HCT116 (cell line): ENCODE measurements at regions of chr5 and their contacts with region 1.

Region 1: DNA sequence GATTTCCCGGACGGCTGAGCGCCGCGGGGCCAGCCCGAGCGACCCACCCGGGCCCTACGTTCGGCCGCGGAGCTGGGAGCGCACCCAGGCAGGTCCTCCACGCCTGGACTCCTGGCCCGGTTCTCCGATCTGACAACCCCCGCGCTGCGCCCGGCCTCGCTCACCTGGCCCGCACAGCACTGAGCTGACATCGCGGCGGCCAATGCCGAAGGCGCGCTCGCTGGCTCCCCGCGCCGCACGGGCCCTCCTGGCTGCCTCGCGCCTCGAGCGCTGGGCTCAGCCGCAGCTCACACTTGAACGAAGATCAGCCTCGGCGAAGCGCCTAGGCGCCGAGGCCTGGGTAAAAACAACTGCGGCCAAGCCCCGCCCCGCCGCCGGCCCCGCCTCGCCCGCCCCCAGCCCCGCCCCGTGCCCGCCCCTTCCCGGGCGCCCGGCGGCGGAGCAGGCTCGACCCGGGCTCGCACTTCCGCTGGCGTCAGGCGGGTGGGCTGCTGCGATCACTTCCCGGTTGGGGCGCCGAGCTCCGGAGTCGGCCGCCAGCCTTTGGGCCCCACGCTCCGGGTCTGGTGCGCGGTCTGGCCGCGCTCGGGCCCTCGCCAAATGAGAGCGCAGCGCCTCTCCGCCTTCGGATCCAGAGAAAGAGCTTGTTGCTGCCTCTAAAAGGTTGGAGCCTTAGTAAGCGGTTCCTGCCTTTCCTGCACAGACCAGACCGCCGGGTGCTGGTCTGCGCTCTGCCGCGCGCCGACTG is at the start of gene SERINC5:
- DNase-seq: peak; percentile 43
- ATAC-seq: peak; percentile 81
- H3K4me3 ChIP-seq: peak within 1 kb of the TSS; percentile 81 to 91
- H3K27ac ChIP-seq: peak within 1 kb of the TSS; percentile 88
- H3K4me1 ChIP-seq: peaks cover 13 to 39% of the 10 kb centered on the region in 2 experiments
- H3K27me3 ChIP-seq: no peaks in the 10 kb centered on the region
- CTCF ChIP-seq: no peak
- POLR2A ChIP-seq: peak; percentile 60
- RAD21 ChIP-seq: 0 out of 2 replicates have a peak, but pooled peaks have one; percentile 1
- total RNA-seq, gene SERINC5: 39.3 TPM

Region 2: GRCh38 chr5:80184235-80185023 is 71.5 kb before region 1 on chr5:
- CTCF ChIA-PET with region 1: no interaction called
- POLR2A ChIA-PET with region 1: interaction called, 7 read pairs
- RAD21 ChIA-PET with region 1: no interaction called
- intact Hi-C with region 1: loop called (anchors 2 kb)
- DNase-seq: no peak
- ATAC-seq: peak; percentile 41
- H3K4me3 ChIP-seq: peak overlapping the region in 1 of 2 experiments; percentile 24; a peak in 2 of 4 replicates
- H3K27ac ChIP-seq: peak overlapping the region; percentile 66
- H3K4me1 ChIP-seq: peaks cover 77 to 80% of the 10 kb centered on the region in 2 experiments
- H3K27me3 ChIP-seq: no peaks in the 10 kb centered on the region
- CTCF ChIP-seq: no peak
- POLR2A ChIP-seq: no peak
- RAD21 ChIP-seq: 0 out of 2 replicates have a peak, but pooled peaks have one; percentile 13

Region 3: GRCh38 chr5:80266566-80266965 is 10.7 kb after region 1 on chr5:
- CTCF ChIA-PET with region 1: no interaction called
- POLR2A ChIA-PET with region 1: interaction called, 21 read pairs
- RAD21 ChIA-PET with region 1: no interaction called
- intact Hi-C with region 1: no loop called
- DNase-seq: no peak
- ATAC-seq: no peak
- H3K4me3 ChIP-seq: no peak overlapping the region
- H3K27ac ChIP-seq: no peak overlapping the region
- H3K4me1 ChIP-seq: peaks cover 3 to 16% of the 10 kb centered on the region in 2 experiments; a peak in 3 of 4 replicates
- H3K27me3 ChIP-seq: no peaks in the 10 kb centered on the region
- CTCF ChIP-seq: 0 out of 6 replicates have a peak, but pooled peaks of 1 of the 3 experiments have one; percentile 5
- POLR2A ChIP-seq: no peak
- RAD21 ChIP-seq: peak; percentile 43; the same call in 1 of the 2 replicates